Activated naive CD4-positive, alpha-beta T cell treated with anti-CD3 and anti-CD28 coated beads for 36 hours (primary cell): ENCODE measurements at regions of chr7 and their contacts with region 1.

Region 1: GRCh38 chr7:105219780-105220160 is 169.0 kb downstream of the SRPK2 start:
- DNase-seq: no peak
- H3K4me3 Mint-ChIP-seq: no peak overlapping the region
- H3K27ac Mint-ChIP-seq: no peak overlapping the region
- H3K4me1 Mint-ChIP-seq: peaks cover 30% of the 10 kb centered on the region
- H3K27me3 Mint-ChIP-seq: no peaks in the 10 kb centered on the region

Region 2: DNA sequence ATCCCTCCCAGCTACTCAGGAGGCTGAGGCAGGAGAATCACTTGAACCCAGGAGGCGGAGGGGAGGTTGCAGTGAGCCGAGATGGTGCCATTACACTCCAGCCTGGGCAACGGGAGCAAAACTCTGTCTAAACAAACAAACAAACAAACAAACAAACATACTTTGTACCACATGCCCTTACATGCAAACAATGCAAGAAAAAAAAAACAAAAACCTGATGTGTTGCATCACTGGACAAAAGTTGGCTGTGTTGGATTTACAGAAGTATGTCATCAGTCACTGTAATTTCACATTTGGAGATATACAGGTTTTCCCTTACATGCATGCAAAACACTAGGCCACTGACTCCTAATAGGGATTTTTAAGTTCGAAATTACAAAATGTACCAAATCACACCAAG is 30.4 kb after region 1 on chr7:
- CTCF ChIA-PET with region 1: interaction called, 3 read pairs
- intact Hi-C with region 1: loop called (anchors 5 kb)
- DNase-seq: no peak
- H3K4me3 Mint-ChIP-seq: no peak overlapping the region
- H3K27ac Mint-ChIP-seq: peak overlapping the region; percentile 17
- H3K4me1 Mint-ChIP-seq: peaks cover 32% of the 10 kb centered on the region
- H3K27me3 Mint-ChIP-seq: no peaks in the 10 kb centered on the region

Region 3: GRCh38 chr7:105522062-105522936 is 302.5 kb after region 1 on chr7 and contains the start of gene PUS7:
- CTCF ChIA-PET with region 1: no interaction called
- intact Hi-C with region 1: no loop called
- DNase-seq: peak; percentile 82
- H3K4me3 Mint-ChIP-seq: peak within 1 kb of the TSS; percentile 96
- H3K27ac Mint-ChIP-seq: peak within 1 kb of the TSS; percentile 81
- H3K4me1 Mint-ChIP-seq: peaks cover 19% of the 10 kb centered on the region
- H3K27me3 Mint-ChIP-seq: no peaks in the 10 kb centered on the region
- total RNA-seq, gene PUS7: 14.3 to 14.6 TPM